Common myeloid progenitor, CD34-positive (primary cell): ENCODE measurements at regions of chr15 and their contacts with region 1.

Region 1: GRCh38 chr15:68924866-68925560 is 5.3 kb upstream of the SPESP1 start:
- DNase-seq: peak; percentile 69 to 85 (median 82)
- H3K4me3 ChIP-seq: no peak overlapping the region
- H3K27ac ChIP-seq: no peak overlapping the region
- H3K4me1 ChIP-seq: no peaks in the 10 kb centered on the region
- H3K27me3 ChIP-seq: peaks cover 0 to 2% (median 0%) of the 10 kb centered on the region in 5 experiments

Region 2: DNA sequence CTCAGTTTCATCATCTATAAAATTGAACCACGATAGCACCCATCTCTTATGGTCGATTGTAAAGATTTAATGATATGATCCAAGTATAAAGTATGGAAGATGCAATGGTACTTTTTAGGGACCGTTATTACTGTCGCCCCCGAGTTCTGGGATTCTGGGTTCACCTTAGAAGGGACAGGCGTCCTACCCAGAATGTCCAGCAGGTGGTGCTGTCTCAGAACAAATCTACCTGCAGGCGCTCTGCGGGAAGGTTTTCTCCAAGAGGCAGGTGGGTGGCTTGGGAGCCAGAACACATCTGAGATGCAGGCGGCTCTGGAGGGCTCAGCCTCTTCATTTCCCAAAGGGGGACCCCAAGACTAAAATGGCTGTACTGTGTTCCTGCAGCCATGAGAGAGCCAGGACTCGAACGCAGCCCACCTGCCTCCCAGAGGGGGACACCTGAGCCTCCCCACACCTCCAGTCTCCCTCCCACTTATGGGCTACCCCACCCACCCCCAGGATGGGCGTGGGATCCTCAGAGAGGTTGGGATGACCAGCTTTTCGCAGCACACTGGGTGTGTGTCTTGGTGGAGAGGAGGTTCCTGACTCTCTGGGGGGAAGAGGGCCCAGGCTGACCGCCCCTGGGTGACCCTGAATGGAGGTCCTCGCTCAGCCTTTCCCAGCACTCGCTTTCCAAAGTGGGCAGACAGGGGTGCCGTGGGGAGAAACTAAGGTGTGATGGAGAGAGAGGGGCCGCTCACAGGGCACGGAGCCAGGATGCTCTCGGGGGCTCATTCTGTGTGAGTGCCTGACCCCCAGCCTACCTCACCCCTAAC is 374.3 kb before region 1 on chr15:
- CTCF ChIA-PET with region 1: interaction called, 21 read pairs
- POLR2A ChIA-PET with region 1: no interaction called
- DNase-seq: peak; percentile 59 to 76 (median 66)
- H3K4me3 ChIP-seq: no peak overlapping the region
- H3K27ac ChIP-seq: no peak overlapping the region
- H3K4me1 ChIP-seq: no peaks in the 10 kb centered on the region
- H3K27me3 ChIP-seq: peaks cover 0 to 9% (median 0%) of the 10 kb centered on the region in 5 experiments

Region 3: DNA sequence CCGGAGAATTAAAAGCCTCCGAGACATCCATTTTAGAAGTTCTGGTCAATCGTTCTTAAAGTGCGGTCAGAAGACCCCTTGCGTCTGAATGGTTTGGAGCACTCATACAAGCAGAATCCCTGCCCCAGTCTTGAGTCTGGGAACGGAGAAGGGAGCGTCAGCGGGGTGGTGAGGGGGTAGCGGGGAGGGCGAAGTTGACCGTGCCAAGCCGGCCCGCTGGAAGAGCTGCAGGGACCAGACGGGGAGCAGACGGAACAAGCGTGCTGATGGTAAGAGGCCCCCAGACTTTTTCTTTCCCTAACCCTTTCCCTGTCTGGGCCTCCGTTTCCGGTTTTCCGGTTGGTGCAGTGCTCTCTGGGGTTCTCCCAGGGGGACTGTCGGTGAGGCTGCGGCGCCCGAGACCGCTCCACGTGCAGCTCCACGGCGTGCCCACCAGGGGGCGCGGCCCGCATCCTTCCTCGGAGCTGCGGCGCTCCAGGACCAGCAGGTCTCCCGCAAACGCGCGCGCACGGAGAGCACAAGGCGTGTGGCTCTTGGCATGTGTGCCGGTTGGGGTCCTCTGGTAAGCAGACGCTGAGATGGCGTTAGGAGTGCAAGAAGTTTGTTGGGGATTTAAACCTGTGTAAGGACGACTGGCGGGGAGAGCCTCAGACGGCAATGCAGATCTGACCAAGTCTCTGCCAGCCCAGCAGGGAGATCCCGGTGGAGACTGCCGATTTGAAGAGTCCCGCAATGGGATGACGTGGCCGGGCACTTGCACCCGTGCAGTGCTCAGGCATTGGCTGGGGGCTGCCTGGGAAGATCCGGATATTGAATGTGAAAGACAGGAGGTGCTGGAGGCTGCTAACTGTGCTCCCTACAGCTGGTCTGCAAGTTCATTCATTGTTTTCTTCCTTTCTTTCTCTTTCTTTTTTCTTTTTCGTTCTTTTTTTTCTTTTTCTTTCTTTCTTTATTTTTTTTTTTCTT is 365.4 kb before region 1 on chr15:
- CTCF ChIA-PET with region 1: interaction called, 18 read pairs
- POLR2A ChIA-PET with region 1: no interaction called
- DNase-seq: peak; percentile 78 to 88 (median 86)
- H3K4me3 ChIP-seq: peak overlapping the region in 6 of 7 experiments; percentile 54 to 74 (median 66)
- H3K27ac ChIP-seq: no peak overlapping the region
- H3K4me1 ChIP-seq: peaks cover 0 to 16% (median 14%) of the 10 kb centered on the region in 4 experiments
- H3K27me3 ChIP-seq: peaks cover 0 to 23% (median 10%) of the 10 kb centered on the region in 5 experiments

Region 4: GRCh38 chr15:68885070-68885469 is 39.9 kb before region 1 on chr15:
- CTCF ChIA-PET with region 1: no interaction called
- POLR2A ChIA-PET with region 1: interaction called, 11 read pairs
- DNase-seq: no peak
- H3K4me3 ChIP-seq: no peak overlapping the region
- H3K27ac ChIP-seq: no peak overlapping the region
- H3K4me1 ChIP-seq: peaks cover 0 to 2% (median 0%) of the 10 kb centered on the region in 4 experiments
- H3K27me3 ChIP-seq: peaks cover 0 to 1% (median 0%) of the 10 kb centered on the region in 5 experiments